GM10248 (cell line): ENCODE measurements at regions of chr20 and their contacts with region 1.

Region 1: GRCh38 chr20:52312132-52312729 is 120.7 kb upstream of the ZFP64 start:
- DNase-seq: peak; percentile 46
- CTCF ChIP-seq: peak; percentile 63

Region 2: GRCh38 chr20:52295556-52295955 is 16.7 kb before region 1 on chr20:
- CTCF ChIA-PET with region 1: interaction called, 47 read pairs
- POLR2A ChIA-PET with region 1: no interaction called
- DNase-seq: no peak
- CTCF ChIP-seq: no peak

Region 3: GRCh38 chr20:52379723-52380336 is 67.6 kb after region 1 on chr20:
- CTCF ChIA-PET with region 1: interaction called, 15 read pairs
- POLR2A ChIA-PET with region 1: no interaction called
- DNase-seq: peak; percentile 34
- CTCF ChIP-seq: peak; percentile 89

Region 4: DNA sequence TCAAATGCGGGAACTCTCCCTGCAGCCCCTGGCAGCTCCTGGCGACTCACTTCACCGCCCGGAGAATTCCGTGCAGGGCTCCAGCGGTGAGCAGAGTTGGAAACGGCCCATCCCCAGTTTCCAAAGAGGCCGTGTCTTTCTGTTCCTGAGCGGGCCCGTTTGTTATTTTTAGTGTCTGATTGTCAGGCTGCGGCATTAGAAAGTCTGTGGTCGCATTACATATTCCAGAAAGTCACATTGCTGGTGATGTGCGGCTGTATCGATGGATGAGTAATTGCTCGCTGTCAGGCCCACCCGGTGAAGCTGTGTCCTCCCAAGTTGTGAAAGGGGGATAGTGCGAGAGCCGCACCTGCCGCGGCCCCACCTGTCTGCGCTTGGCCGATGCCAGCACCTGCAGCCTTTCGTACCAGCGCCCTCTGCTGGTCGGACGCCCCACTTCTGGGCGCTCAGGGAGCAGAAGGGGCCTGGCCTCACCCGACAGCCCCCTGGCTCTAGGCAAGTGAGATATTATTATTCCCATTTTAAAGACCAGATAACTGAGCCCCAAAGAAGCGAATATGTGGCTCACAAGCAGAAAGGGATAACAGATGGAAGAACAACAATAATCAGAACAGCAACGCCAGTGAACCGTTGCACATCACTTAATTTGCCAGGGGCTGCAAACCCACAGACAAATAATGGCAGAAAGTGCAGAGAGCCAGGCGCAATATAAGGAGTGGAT is 904.8 kb after region 1 on chr20:
- CTCF ChIA-PET with region 1: interaction called, 16 read pairs
- POLR2A ChIA-PET with region 1: no interaction called
- DNase-seq: peak; percentile 73
- CTCF ChIP-seq: peak; percentile 95

Region 5: DNA sequence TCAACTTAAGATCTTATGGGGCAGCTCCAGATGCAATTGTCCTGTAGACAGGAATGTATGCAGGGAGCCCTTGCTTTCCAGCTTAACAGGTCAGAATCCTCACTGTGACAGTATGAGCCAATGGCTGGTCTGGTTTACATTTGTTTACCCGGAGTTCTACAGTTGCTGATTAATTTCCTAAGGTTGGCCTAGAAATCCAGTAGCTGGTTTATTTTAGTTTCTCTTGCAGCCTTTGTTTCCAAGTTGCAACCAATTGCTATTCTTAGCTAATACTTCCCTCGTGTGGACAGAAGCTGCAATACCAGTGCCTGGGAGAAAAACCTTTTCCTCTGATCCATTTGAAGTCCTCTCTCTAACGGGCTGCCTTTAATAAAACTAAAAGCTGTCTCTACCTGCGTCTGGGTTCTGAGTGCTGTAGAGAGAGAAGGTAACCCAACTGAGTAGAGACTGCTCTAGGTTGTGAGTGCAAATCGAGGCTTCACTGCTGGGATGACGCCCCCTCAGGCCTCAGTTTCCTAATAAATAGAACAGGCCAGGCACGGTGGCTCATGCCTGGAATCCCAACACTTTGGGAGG is 1235.5 kb after region 1 on chr20:
- CTCF ChIA-PET with region 1: interaction called, 10 read pairs
- POLR2A ChIA-PET with region 1: no interaction called
- DNase-seq: peak; percentile 66
- CTCF ChIP-seq: peak; percentile 71